BJ (cell line): ENCODE measurements at regions of chr12 and their contacts with region 1.

Region 1: DNA sequence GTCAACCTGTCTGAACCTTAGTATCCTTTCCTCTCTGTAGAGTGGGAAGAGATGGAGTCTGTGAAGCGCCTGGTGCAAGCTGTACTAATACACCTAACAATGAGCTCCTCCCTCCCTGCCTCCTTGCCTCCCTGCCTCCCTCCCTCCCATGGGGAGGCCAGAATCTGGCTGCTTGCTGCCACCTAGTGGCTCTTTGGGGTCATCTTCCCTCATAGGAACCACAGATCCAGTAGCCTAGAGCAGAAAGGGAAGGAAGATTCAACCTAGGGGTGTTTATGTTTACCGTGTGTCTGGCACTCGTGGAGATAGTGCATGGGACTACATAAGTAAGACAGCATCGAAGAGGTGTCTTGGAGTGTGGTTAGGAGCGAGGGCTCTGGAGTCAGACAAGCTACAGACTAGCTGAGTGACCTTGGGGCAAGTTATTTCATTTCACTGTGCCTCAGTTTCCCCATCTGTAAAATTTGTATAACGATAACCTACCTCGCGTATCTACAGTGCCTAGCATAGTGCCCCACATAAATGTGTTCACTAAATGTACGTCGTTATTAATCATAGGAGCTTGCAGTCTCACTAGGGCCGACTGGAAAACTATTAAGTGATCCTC is 35.5 kb upstream of the TSPAN9 start:
- DNase-seq: no peak
- H3K4me3 ChIP-seq: no peak overlapping the region
- H3K27me3 ChIP-seq: no peaks in the 10 kb centered on the region
- CTCF ChIP-seq: peak; percentile 85

Region 2: GRCh38 chr12:2845280-2845679 is 196.4 kb before region 1 on chr12:
- CTCF ChIA-PET with region 1: interaction called, 10 read pairs
- POLR2A ChIA-PET with region 1: no interaction called
- DNase-seq: no peak
- H3K4me3 ChIP-seq: no peak overlapping the region
- H3K27me3 ChIP-seq: no peaks in the 10 kb centered on the region
- CTCF ChIP-seq: no peak

Region 3: GRCh38 chr12:2853626-2854025 is 188.0 kb before region 1 on chr12:
- CTCF ChIA-PET with region 1: interaction called, 12 read pairs
- POLR2A ChIA-PET with region 1: no interaction called
- DNase-seq: no peak
- H3K4me3 ChIP-seq: no peak overlapping the region
- H3K27me3 ChIP-seq: no peaks in the 10 kb centered on the region
- CTCF ChIP-seq: peak; percentile 95

Region 4: GRCh38 chr12:3073438-3074250 is 32.0 kb after region 1 on chr12:
- CTCF ChIA-PET with region 1: no interaction called
- POLR2A ChIA-PET with region 1: no interaction called
- DNase-seq: peak; percentile 36
- H3K4me3 ChIP-seq: no peak overlapping the region
- H3K27me3 ChIP-seq: no peaks in the 10 kb centered on the region; the same call in 1 of the 2 replicates
- CTCF ChIP-seq: peak; percentile 99